Activated T-helper 1 cell treated with anti-CD3 and anti-CD28 coated beads, Interleukin-12 subunit alpha, Interleukin-12 subunit beta, Interleukin-2, Interleukin-4 antibody, amounts not matched to agents 30 ng/mL and 10 ng/mL and 1 ng/mL, durations not matched to agents 14 hours and 24 hours and 36 hours (primary cell): ENCODE measurements at regions of chr14 and their contacts with region 1.

Region 1: DNA sequence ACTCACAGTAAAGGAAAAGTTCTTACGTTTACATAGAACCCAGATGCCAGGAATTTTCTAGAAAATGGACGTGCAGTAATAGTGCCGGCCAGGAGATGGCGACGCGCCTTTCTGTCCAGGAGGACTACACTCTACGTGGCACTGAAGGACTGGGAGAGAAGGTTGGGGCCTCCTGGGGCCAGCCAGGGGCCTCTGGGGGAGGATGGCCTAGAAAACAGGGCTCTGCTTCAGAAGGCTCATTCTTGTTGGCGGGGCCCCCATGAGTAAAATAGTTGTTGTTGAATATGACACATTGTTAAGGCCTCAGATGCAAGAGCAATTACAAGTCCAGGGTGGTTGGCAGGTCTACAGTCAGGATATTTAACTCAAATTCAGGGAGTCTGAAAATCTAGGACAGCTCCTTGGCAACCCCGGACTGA is 120.1 kb upstream of the MAX start:
- DNase-seq: peak; percentile 34
- H3K4me3 Mint-ChIP-seq: no peak overlapping the region
- H3K27ac Mint-ChIP-seq: peak overlapping the region; percentile 41
- H3K4me1 Mint-ChIP-seq: peaks cover 48% of the 10 kb centered on the region
- H3K27me3 Mint-ChIP-seq: no peaks in the 10 kb centered on the region

Region 2: DNA sequence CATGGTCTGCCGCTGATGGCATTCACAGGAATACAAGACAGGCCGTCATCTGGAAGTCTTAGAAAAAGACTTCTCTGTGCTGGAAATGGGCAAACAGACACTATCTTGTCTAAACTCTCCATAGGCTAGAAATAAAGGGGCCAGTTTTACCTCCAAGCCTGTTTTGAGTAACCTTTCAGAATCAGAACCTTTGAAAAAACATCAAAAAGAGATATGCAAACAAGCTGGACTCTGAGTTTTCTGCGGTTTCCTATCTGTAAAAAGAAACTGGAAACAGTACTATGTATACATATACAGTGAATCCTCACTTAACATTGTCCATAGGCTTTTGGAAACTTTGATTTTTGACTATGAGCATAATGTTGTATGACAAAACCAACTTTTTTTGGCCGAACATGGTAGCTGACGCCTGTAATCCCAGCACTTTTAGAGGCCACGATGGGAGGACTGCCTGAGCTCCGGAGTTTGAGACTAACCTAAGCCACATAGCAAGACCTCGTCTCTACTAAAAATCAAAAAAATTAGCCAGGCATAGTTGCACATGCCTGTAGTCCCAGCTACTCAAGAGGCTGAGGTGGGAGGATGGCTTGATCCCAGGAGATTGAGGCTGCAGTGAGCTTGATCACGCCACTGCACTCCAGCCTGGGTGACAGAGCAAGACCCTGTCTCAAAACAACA is 27.3 kb before region 1 on chr14:
- intact Hi-C with region 1: no loop called
- DNase-seq: no peak
- H3K4me3 Mint-ChIP-seq: no peak overlapping the region
- H3K27ac Mint-ChIP-seq: no peak overlapping the region
- H3K4me1 Mint-ChIP-seq: peaks cover 9% of the 10 kb centered on the region
- H3K27me3 Mint-ChIP-seq: peaks cover 3% of the 10 kb centered on the region

Region 3: DNA sequence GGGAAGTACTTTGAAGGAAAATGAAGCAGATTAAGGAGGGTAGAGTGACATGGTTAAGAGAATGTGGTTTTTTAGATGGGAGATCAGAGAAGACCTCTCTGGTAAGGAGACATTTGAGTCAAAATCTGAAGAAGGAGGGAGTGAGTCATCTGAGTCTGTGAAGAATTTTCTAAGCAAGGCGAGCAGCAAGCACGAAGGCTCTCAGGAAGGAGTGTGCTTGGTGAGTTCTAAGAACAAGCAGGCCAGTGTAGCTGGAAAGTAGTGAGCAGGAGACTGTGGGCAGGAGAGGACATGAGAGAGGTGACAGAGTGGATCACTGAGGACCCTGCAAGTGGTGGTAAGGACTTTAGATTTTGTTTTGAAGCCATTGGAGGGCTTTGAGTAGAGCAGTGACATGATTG is 113.7 kb after region 1 on chr14:
- intact Hi-C with region 1: loop called (anchors 2 kb)
- DNase-seq: peak; percentile 63
- H3K4me3 Mint-ChIP-seq: peak overlapping the region; percentile 91
- H3K27ac Mint-ChIP-seq: peak overlapping the region; percentile 96
- H3K4me1 Mint-ChIP-seq: peaks cover 59% of the 10 kb centered on the region
- H3K27me3 Mint-ChIP-seq: no peaks in the 10 kb centered on the region

Region 4: DNA sequence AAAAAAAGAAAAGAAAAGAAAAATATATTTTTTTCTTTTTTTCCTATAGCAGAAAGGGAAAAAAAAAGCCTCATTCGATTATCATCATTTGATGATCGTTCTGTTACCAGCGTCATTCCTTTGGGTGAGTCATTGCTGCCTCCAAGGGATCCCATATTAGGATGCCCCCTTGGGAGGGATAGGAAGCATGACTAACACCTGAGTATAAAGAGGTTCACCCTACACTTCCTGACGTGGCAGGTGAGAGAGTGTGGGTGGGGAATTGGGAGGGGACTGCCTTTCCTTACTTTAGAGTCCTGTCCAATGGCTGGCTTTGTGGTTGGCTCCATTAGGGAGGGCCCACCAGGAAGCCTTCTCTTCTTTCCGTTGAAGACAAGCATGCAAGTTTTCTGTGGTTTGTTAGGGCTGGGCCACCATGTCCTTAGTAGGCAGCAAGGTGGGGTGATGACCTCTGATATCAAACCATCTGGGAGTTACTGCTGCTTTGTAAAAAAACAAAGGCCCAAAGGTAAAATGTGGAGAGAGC is 133.9 kb after region 1 on chr14:
- intact Hi-C with region 1: loop called (anchors 2 kb)
- DNase-seq: no peak
- H3K4me3 Mint-ChIP-seq: peak overlapping the region; percentile 12
- H3K27ac Mint-ChIP-seq: peak overlapping the region; percentile 87
- H3K4me1 Mint-ChIP-seq: peaks cover 87% of the 10 kb centered on the region
- H3K27me3 Mint-ChIP-seq: no peaks in the 10 kb centered on the region

Region 5: GRCh38 chr14:65824285-65824977 is 602.0 kb after region 1 on chr14:
- intact Hi-C with region 1: loop called (anchors 1 kb)
- DNase-seq: peak; percentile 53
- H3K4me3 Mint-ChIP-seq: no peak overlapping the region
- H3K27ac Mint-ChIP-seq: no peak overlapping the region
- H3K4me1 Mint-ChIP-seq: peaks cover 28% of the 10 kb centered on the region
- H3K27me3 Mint-ChIP-seq: peaks cover 9% of the 10 kb centered on the region

Region 6: GRCh38 chr14:66070509-66071319 is 848.3 kb after region 1 on chr14:
- intact Hi-C with region 1: loop called (anchors 1 kb)
- DNase-seq: peak; percentile 48
- H3K4me3 Mint-ChIP-seq: no peak overlapping the region
- H3K27ac Mint-ChIP-seq: no peak overlapping the region
- H3K4me1 Mint-ChIP-seq: peaks cover 13% of the 10 kb centered on the region
- H3K27me3 Mint-ChIP-seq: peaks cover 16% of the 10 kb centered on the region